Activated naive CD4-positive, alpha-beta T cell treated with anti-CD3 and anti-CD28 coated beads for 36 hours (primary cell): ENCODE measurements at regions of chr3 and their contacts with region 1.

Region 1: GRCh38 chr3:151203051-151203420 is at the start of gene GPR171:
- DNase-seq: peak; percentile 81
- H3K4me3 Mint-ChIP-seq: peak within 1 kb of the TSS; percentile 94
- H3K27ac Mint-ChIP-seq: peak within 1 kb of the TSS; percentile 100
- H3K4me1 Mint-ChIP-seq: peaks cover 60% of the 10 kb centered on the region
- H3K27me3 Mint-ChIP-seq: no peaks in the 10 kb centered on the region
- total RNA-seq, gene GPR171: 42.8 to 46.9 TPM

Region 2: GRCh38 chr3:150546226-150547044 is 656.6 kb before region 1 on chr3 and contains the starts of genes EIF2A and SERP1:
- CTCF ChIA-PET with region 1: no interaction called
- intact Hi-C with region 1: loop called (anchors 2 kb)
- DNase-seq: peak; percentile 99
- H3K4me3 Mint-ChIP-seq: peak within 1 kb of the TSS; percentile 97
- H3K27ac Mint-ChIP-seq: peak within 1 kb of the TSS; percentile 95
- H3K4me1 Mint-ChIP-seq: peaks cover 69% of the 10 kb centered on the region
- H3K27me3 Mint-ChIP-seq: no peaks in the 10 kb centered on the region
- total RNA-seq, gene EIF2A: 133 to 135 TPM
- total RNA-seq, gene SERP1: 95.9 to 105 TPM

Region 3: DNA sequence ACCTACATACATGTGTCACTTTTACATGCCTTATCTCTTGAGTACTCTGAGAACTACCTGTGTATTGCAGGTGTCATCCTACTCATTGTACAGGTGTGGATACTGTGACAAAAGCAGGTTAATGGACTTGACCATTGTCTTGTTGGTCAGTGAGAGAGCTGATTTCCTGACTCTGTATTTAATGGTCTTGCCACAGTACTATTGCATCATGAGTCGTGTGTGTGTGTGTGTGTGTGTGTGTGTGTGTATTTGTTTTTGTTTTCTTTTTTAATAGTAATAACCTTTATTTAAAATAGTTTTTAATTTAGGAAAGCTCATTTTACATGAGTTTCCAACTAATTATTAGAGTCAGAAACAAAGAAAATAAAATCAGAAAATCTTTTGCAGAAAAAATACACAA is 592.2 kb before region 1 on chr3:
- CTCF ChIA-PET with region 1: no interaction called
- intact Hi-C with region 1: loop called (anchors 5 kb)
- DNase-seq: no peak
- H3K4me3 Mint-ChIP-seq: no peak overlapping the region
- H3K27ac Mint-ChIP-seq: no peak overlapping the region
- H3K4me1 Mint-ChIP-seq: peaks cover 72% of the 10 kb centered on the region
- H3K27me3 Mint-ChIP-seq: no peaks in the 10 kb centered on the region

Region 4: GRCh38 chr3:150811984-150812383 is 391.1 kb before region 1 on chr3:
- CTCF ChIA-PET with region 1: no interaction called
- intact Hi-C with region 1: no loop called
- DNase-seq: no peak
- H3K4me3 Mint-ChIP-seq: no peak overlapping the region
- H3K27ac Mint-ChIP-seq: no peak overlapping the region
- H3K4me1 Mint-ChIP-seq: no peaks in the 10 kb centered on the region
- H3K27me3 Mint-ChIP-seq: peaks cover 5% of the 10 kb centered on the region

Region 5: DNA sequence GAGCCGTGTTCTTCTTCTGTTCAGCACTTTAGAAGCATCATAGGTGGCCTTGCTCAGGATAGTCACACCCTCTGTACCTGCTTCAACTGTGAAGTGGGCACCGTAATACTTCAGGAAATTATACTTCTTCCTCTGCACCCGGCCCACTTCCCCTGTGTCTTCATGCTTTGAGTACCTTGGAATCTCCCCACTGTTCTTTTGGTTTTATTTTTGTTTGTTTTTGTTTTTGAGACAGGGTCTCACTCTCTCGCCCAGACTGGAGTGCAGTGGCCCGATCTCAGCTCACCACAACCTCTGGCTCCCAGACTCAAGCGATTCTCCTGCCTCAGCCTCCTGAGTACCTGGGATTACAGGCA is 73.6 kb after region 1 on chr3:
- CTCF ChIA-PET with region 1: interaction called, 6 read pairs
- intact Hi-C with region 1: loop called (anchors 2 kb)
- DNase-seq: peak; percentile 77
- H3K4me3 Mint-ChIP-seq: peak overlapping the region; percentile 55
- H3K27ac Mint-ChIP-seq: peak overlapping the region; percentile 85
- H3K4me1 Mint-ChIP-seq: peaks cover 39% of the 10 kb centered on the region
- H3K27me3 Mint-ChIP-seq: no peaks in the 10 kb centered on the region

Region 6: DNA sequence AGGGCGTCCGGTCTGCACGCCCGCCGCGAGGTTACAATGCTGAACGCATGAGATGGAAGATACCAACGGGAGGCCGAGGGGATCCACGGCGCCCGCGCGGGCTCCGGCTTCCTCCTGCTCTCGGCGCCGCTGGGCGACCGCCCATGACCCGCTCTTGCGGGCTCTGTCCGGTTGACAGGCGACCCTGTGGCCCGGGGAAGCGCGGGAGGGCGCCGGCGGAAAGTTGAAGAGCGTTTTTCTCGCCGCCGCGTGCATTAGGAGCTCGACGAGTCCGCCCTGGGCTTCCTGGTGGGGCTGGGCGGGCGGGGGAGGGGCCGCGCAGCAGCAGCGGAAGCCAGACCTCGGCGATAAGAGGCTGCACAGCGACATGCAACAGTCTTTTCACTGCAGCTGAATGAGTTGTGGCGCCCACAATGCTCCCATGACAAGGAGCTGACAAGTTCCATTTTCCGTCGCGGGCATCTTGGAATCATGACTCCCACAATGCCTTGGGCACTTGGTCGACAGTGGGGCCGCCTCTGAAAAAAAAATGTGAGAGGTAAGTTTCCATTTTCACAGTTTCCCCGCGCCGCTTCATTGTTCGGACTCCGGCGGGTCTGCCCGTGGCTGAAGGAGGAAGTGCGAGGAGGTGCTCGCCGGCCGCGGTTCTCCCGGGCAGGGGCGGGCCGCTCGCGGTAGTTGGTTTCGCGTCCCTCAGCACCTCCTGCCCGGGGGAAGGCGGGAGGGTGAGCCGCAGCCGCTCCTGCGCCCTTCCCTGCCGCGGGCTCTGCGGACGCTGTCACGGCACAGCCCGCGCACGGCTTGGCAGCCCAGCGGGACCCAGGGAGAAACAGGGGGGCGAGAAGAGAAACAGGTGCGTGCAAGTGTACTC is 1065.8 kb after region 1 on chr3 and contains the start of gene MBNL1:
- CTCF ChIA-PET with region 1: no interaction called
- intact Hi-C with region 1: loop called (anchors 5 kb)
- DNase-seq: peak; percentile 91
- H3K4me3 Mint-ChIP-seq: peak within 1 kb of the TSS; percentile 81
- H3K27ac Mint-ChIP-seq: peak within 1 kb of the TSS; percentile 91
- H3K4me1 Mint-ChIP-seq: peaks cover 46% of the 10 kb centered on the region
- H3K27me3 Mint-ChIP-seq: no peaks in the 10 kb centered on the region
- total RNA-seq, gene MBNL1: 387 to 391 TPM

Region 7: DNA sequence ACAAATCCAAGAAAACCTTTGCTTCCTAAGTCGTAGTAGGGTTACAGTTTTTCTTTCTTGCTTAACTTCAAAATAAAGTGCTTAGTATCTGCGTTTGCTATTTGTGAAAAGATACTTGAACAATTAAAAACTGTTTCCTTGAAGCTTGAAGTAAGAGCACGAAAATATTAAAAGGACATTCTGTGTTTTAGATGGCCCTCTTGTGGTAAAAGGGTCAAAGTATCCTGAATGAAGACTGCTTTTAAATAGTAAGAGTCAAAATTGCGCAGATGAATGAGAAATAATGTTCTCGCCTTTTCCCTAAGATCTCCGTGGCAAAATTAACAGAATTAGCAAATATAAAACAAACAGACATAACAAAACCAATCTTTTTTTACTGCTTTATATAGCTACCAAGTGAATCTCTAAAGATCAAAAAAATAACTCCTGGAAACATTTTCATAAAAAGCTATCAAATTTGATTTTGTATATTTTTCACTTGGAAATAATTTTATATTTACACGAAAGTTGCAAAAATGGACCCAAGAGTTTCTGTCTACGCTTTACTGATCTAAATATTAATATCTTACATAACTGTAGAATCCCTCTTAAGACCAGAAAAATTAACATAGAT is 1241.1 kb after region 1 on chr3:
- CTCF ChIA-PET with region 1: no interaction called
- intact Hi-C with region 1: loop called (anchors 10 kb)
- DNase-seq: no peak
- H3K4me3 Mint-ChIP-seq: no peak overlapping the region
- H3K27ac Mint-ChIP-seq: peak overlapping the region; percentile 56
- H3K4me1 Mint-ChIP-seq: peaks cover 68% of the 10 kb centered on the region
- H3K27me3 Mint-ChIP-seq: no peaks in the 10 kb centered on the region